Gastrocnemius medialis (tissue), 4 donors: ENCODE measurements at regions of chr10 and their contacts with region 1.

Region 1: DNA sequence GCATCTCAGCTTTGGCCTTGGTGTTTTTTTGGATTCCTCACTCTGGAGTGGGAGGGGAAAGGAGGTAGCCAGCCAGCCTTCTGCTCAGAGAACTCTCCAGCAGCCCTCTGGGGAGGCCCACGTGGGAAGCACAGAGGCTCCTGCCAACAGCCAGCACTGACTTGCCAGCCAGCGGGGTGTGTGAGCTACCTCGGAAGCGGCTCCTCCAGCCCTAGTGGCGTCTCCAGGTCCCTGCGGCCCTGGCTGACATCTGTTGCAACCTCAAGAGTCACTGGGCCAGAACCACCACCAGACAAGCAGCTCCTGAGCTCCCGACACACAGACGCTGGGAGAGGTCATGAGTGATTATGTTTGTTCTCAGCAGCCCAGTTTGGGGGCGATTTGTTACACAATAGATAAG is 180.2 kb upstream of the FZD8 start:
- DNase-seq: peak; percentile 23 to 78
- ATAC-seq: peak; percentile 52 to 82
- H3K4me3 ChIP-seq: no peak overlapping the region
- H3K27ac ChIP-seq: peak overlapping the region in 1 of 4 donors; percentile 22
- H3K4me1 ChIP-seq: no peaks in the 10 kb centered on the region
- H3K27me3 ChIP-seq: no peaks in the 10 kb centered on the region
- CTCF ChIP-seq: peak in 2 of 5 experiments; percentile 14 to 33
- POLR2A ChIP-seq: no peak

Region 2: DNA sequence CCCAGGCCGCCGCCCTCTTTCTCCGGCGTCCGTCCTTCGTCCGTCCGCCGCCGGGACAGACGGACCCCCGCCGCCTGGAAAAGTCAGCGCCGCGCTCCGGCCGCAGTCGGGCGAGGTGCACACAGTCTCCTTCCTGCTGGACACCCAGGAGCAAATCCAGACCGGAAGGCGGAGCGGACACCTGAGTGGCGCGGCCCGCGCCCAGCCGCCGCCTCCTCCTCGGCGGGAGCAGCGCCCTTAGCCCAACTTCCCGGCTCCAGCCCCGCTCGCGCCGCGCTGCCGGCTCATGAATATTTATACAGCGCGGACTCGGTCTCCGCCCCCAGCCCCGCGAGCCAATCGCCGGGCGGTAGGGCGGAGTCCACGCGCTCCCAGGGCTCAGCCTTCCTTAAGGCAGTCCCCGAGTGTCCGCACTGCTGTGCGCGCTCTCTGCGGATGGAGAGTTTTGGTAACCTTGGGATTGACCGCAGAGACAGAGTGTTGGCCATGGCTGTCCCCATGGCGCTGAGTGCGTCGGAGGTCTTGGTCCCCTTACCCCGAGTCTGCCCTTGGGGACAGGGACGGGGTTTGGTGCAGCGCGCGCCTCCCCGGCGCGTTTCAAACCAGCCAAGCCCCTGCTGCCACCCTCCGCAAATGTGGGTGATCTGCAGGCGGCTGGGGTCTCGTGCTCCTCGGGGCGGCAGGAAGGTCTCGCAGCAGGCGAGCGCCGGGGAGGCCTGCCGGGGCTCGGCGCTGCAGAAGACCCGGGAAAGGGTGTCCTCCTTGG is 180.1 kb before region 1 on chr10 and contains the start of gene FZD8:
- in situ Hi-C with region 1: no loop called
- intact Hi-C with region 1: loop called (anchors 5 kb)
- DNase-seq: peak; percentile 84 to 89
- ATAC-seq: peak; percentile 77 to 80
- H3K4me3 ChIP-seq: peak within 1 kb of the TSS; percentile 73 to 88 (median 80)
- H3K27ac ChIP-seq: peak within 1 kb of the TSS; percentile 81 to 95 (median 89)
- H3K4me1 ChIP-seq: peaks cover 4 to 17% of the 10 kb centered on the region in 2 donors
- H3K27me3 ChIP-seq: no peaks in the 10 kb centered on the region
- CTCF ChIP-seq: peak in 3 of 5 experiments; percentile 5 to 39 (median 9)
- POLR2A ChIP-seq: peak; percentile 93 to 98
- total RNA-seq, gene FZD8: 3.0 to 9.3 (median 4.1) TPM

Region 3: DNA sequence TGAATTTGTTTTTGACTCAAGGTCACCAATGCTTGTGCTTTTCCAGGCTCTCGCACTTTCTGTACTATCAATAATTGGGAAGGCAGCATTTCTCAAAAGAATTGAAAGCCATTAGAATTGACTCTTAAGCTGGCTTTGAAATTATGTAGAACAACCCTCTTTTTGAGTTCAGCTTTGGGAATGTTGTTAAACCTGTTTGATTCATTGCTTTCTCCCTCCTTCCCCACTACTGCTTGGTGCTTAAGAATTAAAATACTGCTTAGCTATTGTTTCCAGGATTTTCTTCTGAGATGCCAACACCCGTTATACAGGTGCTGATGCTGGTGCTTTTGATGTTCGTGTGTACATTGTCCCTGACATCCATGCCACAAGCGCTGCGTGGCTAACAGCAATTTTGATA is 164.7 kb before region 1 on chr10:
- in situ Hi-C with region 1: no loop called
- intact Hi-C with region 1: no loop called
- DNase-seq: no peak
- ATAC-seq: no peak
- H3K4me3 ChIP-seq: no peak overlapping the region
- H3K27ac ChIP-seq: no peak overlapping the region
- H3K4me1 ChIP-seq: no peaks in the 10 kb centered on the region
- H3K27me3 ChIP-seq: no peaks in the 10 kb centered on the region
- CTCF ChIP-seq: no peak
- POLR2A ChIP-seq: no peak

Region 4: DNA sequence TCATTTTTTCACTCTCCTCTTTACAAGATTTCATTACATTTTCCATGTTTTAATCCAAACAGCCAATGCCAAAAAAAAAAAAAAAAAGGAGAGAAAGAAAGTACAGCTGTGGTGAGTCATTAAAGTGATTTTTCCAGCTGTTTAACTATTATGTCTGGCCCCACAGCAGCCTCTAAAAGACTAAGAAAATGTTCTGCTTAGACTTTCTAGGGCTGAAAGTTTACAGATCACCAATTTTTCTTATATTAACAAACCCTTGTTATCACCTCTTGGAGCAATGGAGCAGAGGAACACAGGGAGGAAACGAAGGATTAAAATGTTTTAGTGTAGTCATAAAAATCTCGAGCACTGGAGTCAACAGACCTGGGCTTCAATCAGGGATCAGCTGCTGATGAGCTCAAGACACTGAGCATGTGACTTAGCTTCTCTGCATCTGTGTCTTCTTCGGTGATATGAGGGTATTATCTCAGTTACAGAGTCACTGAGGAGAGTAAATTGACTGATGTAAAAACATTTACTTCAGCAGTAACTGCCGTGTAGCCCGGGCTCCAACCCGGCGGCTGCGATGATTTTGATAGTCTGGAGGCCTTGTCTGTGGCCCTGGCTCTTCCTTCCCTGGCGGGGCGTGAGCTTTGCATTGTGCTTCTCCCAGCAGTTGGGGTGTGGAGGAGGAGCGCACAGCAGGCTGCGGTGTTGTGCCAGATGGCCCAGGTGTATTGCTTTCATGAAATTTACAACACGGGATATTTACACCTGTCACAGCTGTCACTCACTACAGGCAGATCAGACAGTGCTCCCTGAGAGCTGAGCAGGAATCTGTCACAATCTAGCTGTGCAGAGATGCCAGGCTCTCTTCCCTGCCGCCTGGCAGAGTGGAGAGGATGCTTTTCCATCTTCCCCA is 118.1 kb after region 1 on chr10:
- in situ Hi-C with region 1: no loop called
- intact Hi-C with region 1: loop called (anchors 2 kb)
- DNase-seq: peak in 1 of 2 donors; percentile 25
- ATAC-seq: peak; percentile 37 to 59
- H3K4me3 ChIP-seq: no peak overlapping the region
- H3K27ac ChIP-seq: peak overlapping the region in 2 of 4 donors; percentile 7 to 27
- H3K4me1 ChIP-seq: no peaks in the 10 kb centered on the region
- H3K27me3 ChIP-seq: no peaks in the 10 kb centered on the region
- CTCF ChIP-seq: no peak
- POLR2A ChIP-seq: no peak